GM12878 (cell line): ENCODE measurements at regions of chr3 and their contacts with region 1.

Region 1: DNA sequence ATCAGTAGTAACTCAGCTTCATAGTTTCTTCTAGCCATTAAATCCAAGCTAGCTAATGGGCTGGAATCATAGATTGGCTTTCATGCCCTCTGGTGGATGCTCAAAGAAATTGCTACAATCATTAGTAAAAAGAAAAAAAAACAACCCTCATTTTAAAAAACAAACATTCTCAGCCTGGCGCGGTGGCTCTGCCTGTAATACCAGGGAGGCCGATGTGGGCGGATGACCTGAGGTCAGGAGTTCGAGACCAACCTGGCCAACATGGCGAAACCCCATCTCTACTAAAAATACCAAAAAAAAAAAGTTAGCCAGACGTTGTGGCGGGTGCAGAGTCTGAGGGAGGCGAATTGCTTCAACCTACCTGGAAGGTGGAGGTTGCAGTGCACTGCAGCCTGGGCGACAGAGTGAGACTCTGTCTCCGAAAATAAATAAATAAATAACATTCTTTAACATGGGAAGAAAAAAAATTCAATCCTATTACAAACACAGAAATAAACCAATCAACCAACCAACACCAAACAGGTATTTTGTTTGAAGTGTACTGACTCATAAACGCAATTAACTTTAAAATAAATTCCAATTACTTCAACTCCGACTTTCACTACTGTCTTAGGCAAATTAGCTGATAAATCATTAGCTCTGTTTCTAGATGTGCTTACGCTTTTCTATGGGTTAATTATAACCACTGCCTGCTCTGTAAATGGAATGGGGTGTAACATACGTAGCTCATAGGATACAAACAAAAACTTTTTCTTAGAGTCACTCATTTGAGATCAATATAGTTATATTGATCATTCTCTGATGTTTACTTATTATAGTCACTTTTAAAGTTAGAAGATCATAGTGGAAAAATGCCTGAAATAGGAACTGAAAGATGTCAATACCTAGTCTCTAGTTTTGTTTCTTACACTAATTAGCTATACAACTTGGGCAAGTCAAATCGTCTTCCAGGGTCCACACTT is 24.9 kb downstream of the TMEM207 start:
- DNase-seq: peak; percentile 20
- ATAC-seq: peak; percentile 90
- H3K4me3 ChIP-seq: no peak overlapping the region
- H3K27ac ChIP-seq: no peak overlapping the region
- H3K4me1 ChIP-seq: peaks cover 6% of the 10 kb centered on the region
- H3K27me3 ChIP-seq: no peaks in the 10 kb centered on the region
- CTCF ChIP-seq: peak; percentile 48 to 59 (median 53); a peak in 5 of 6 replicates
- EP300 ChIP-seq: no peak
- POLR2A ChIP-seq: no peak
- RAD21 ChIP-seq: peak; percentile 69

Region 2: DNA sequence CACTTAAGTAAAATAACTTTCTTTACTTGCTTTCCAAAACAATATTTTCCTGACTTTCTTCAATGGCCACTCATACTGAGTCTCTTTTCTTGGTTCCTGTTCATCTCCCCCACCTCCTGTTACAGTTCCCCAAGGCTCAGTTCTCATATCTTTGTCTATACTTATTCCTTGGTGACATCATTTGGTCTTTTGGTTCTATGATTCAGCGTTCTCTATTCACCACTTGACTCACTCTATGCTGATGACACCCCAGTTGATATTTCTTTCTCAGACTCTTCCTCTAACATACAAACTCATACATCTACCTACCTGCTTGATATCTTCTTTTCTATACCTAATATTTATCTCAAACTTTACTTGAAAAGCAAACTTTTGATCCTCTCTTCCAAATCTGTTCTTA is 219.0 kb before region 1 on chr3:
- CTCF ChIA-PET with region 1: interaction called, 14 read pairs
- POLR2A ChIA-PET with region 1: interaction called, 4 read pairs
- RAD21 ChIA-PET with region 1: interaction called, 25 read pairs
- SMC1A ChIA-PET with region 1: interaction called, 5 read pairs
- in situ Hi-C with region 1: no loop called
- intact Hi-C with region 1: no loop called
- DNase-seq: peak; percentile 42
- ATAC-seq: peak; percentile 81
- H3K4me3 ChIP-seq: no peak overlapping the region
- H3K27ac ChIP-seq: 0 out of 2 replicates have a peak overlapping the region, but pooled peaks have one; percentile 6
- H3K4me1 ChIP-seq: peaks cover 6% of the 10 kb centered on the region
- H3K27me3 ChIP-seq: no peaks in the 10 kb centered on the region
- CTCF ChIP-seq: no peak
- EP300 ChIP-seq: peak in 1 of 2 experiments; percentile 75; a peak in 1 of 4 replicates
- POLR2A ChIP-seq: no peak
- RAD21 ChIP-seq: no peak

Region 3: DNA sequence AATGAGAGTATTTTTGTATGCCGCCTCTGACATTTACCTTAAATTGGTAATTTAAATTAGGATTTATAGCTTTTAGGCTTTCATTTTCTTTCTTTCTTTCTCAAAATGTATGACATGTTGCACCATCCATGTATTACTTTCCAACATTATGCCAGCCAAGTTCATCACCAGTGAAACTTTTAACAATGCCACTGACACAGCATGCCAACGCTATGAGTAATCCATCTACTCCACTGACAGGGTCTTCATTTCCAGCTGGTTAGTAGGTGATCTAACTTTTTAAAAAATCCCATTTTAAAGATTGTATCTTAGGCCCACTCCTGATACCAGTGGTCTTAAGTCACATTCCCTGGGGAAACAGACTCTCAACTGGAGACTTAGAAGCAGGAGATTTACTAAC is 58.6 kb before region 1 on chr3:
- CTCF ChIA-PET with region 1: no interaction called
- POLR2A ChIA-PET with region 1: no interaction called
- RAD21 ChIA-PET with region 1: interaction called, 11 read pairs
- SMC1A ChIA-PET with region 1: interaction called, 5 read pairs
- in situ Hi-C with region 1: no loop called
- intact Hi-C with region 1: no loop called
- DNase-seq: no peak
- ATAC-seq: no peak
- H3K4me3 ChIP-seq: no peak overlapping the region
- H3K27ac ChIP-seq: no peak overlapping the region
- H3K4me1 ChIP-seq: no peaks in the 10 kb centered on the region
- H3K27me3 ChIP-seq: no peaks in the 10 kb centered on the region
- CTCF ChIP-seq: no peak
- EP300 ChIP-seq: no peak
- POLR2A ChIP-seq: no peak
- RAD21 ChIP-seq: no peak

Region 4: GRCh38 chr3:190384241-190384863 is 40.4 kb before region 1 on chr3:
- CTCF ChIA-PET with region 1: interaction called, 42 read pairs
- POLR2A ChIA-PET with region 1: no interaction called
- RAD21 ChIA-PET with region 1: interaction called, 32 read pairs
- SMC1A ChIA-PET with region 1: interaction called, 39 read pairs
- in situ Hi-C with region 1: no loop called
- intact Hi-C with region 1: loop called (anchors 1 kb)
- DNase-seq: peak; percentile 19
- ATAC-seq: peak; percentile 94
- H3K4me3 ChIP-seq: no peak overlapping the region
- H3K27ac ChIP-seq: no peak overlapping the region
- H3K4me1 ChIP-seq: no peaks in the 10 kb centered on the region
- H3K27me3 ChIP-seq: no peaks in the 10 kb centered on the region
- CTCF ChIP-seq: peak; percentile 49 to 68 (median 59); a peak in 5 of 6 replicates
- EP300 ChIP-seq: no peak
- POLR2A ChIP-seq: no peak
- RAD21 ChIP-seq: peak; percentile 82

Region 5: GRCh38 chr3:190401963-190402362 is 22.8 kb before region 1 on chr3:
- CTCF ChIA-PET with region 1: interaction called, 17 read pairs
- POLR2A ChIA-PET with region 1: no interaction called
- RAD21 ChIA-PET with region 1: interaction called, 3 read pairs
- SMC1A ChIA-PET with region 1: interaction called, 20 read pairs
- in situ Hi-C with region 1: no loop called
- intact Hi-C with region 1: no loop called
- DNase-seq: no peak
- ATAC-seq: no peak
- H3K4me3 ChIP-seq: no peak overlapping the region
- H3K27ac ChIP-seq: no peak overlapping the region
- H3K4me1 ChIP-seq: no peaks in the 10 kb centered on the region
- H3K27me3 ChIP-seq: no peaks in the 10 kb centered on the region
- CTCF ChIP-seq: no peak
- EP300 ChIP-seq: no peak
- POLR2A ChIP-seq: no peak
- RAD21 ChIP-seq: no peak

Region 6: GRCh38 chr3:190414297-190414696 is 10.5 kb before region 1 on chr3:
- CTCF ChIA-PET with region 1: interaction called, 19 read pairs
- POLR2A ChIA-PET with region 1: no interaction called
- RAD21 ChIA-PET with region 1: interaction called, 11 read pairs
- SMC1A ChIA-PET with region 1: interaction called, 17 read pairs
- in situ Hi-C with region 1: no loop called
- intact Hi-C with region 1: no loop called
- DNase-seq: no peak
- ATAC-seq: no peak
- H3K4me3 ChIP-seq: no peak overlapping the region
- H3K27ac ChIP-seq: no peak overlapping the region
- H3K4me1 ChIP-seq: no peaks in the 10 kb centered on the region
- H3K27me3 ChIP-seq: no peaks in the 10 kb centered on the region
- CTCF ChIP-seq: no peak
- EP300 ChIP-seq: no peak
- POLR2A ChIP-seq: no peak
- RAD21 ChIP-seq: no peak

Region 7: GRCh38 chr3:190443257-190443656 is 18.5 kb after region 1 on chr3:
- CTCF ChIA-PET with region 1: interaction called, 38 read pairs
- POLR2A ChIA-PET with region 1: no interaction called
- RAD21 ChIA-PET with region 1: interaction called, 12 read pairs
- SMC1A ChIA-PET with region 1: interaction called, 6 read pairs
- in situ Hi-C with region 1: no loop called
- intact Hi-C with region 1: no loop called
- DNase-seq: no peak
- ATAC-seq: no peak
- H3K4me3 ChIP-seq: no peak overlapping the region
- H3K27ac ChIP-seq: no peak overlapping the region
- H3K4me1 ChIP-seq: no peaks in the 10 kb centered on the region
- H3K27me3 ChIP-seq: no peaks in the 10 kb centered on the region
- CTCF ChIP-seq: peak in 1 of 3 experiments; percentile 6; a peak in 1 of 6 replicates
- EP300 ChIP-seq: no peak
- POLR2A ChIP-seq: no peak
- RAD21 ChIP-seq: no peak